K562 (cell line): ENCODE measurements at regions of chr2 and their contacts with region 1.

Region 1: GRCh38 chr2:196131384-196131937 is 39.9 kb downstream of the STK17B start:
- DNase-seq: peak; percentile 39 to 87 (median 46)
- ATAC-seq: peak; percentile 87
- H3K4me3 ChIP-seq: no peak overlapping the region
- H3K27ac ChIP-seq: no peak overlapping the region
- H3K4me1 ChIP-seq: peaks cover 0 to 25% of the 10 kb centered on the region in 2 experiments; a peak in 3 of 5 replicates
- H3K27me3 ChIP-seq: no peaks in the 10 kb centered on the region
- CTCF ChIP-seq: peak; percentile 71 to 80 (median 76)
- EP300 ChIP-seq: no peak
- POLR2A ChIP-seq: no peak
- RAD21 ChIP-seq: peak; percentile 91 to 93

Region 2: DNA sequence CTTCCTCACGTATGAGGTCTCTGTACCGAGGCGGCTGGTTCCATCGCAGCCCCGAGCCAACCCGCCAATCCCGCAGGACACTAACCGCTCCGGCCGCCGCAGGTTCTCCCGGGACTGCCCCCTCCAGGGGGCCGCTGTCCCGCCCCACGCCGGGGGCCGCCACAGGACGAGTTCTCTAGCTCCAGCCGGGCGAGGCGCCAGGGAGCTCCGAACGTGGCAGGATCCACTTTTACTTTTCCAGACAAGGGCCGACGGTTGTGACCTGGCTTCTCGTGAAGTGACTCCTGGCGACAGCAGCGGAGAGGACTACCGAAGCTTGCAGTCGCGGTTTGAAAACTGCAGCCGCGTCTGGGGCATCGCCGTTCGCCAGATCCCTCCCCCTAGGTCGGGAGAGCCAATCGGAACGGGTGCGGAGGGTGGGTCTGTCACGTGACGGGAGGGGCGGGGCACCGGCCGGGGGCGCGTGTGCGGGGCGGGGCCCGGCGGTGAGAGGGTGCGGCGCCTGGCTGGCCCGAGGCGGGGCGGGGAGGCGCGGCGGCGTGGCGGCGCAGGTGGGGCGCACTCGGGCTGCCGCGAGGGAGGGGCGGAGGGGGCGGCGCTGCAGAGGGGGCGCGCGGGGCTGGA is 39.9 kb after region 1 on chr2 and contains the start of gene STK17B:
- CTCF ChIA-PET with region 1: no interaction called
- POLR2A ChIA-PET with region 1: no interaction called
- in situ Hi-C with region 1: no loop called
- intact Hi-C with region 1: loop called (anchors 2 kb)
- DNase-seq: peak; percentile 93 to 97 (median 96)
- ATAC-seq: peak; percentile 87
- H3K4me3 ChIP-seq: peak within 1 kb of the TSS; percentile 87
- H3K27ac ChIP-seq: peak within 1 kb of the TSS; percentile 91
- H3K4me1 ChIP-seq: peaks cover 12 to 26% of the 10 kb centered on the region in 2 experiments; a peak in 4 of 5 replicates
- H3K27me3 ChIP-seq: no peaks in the 10 kb centered on the region
- CTCF ChIP-seq: peak in 2 of 3 experiments; percentile 21 to 28; a peak in 2 of 6 replicates
- EP300 ChIP-seq: no peak
- POLR2A ChIP-seq: peak; percentile 93
- RAD21 ChIP-seq: no peak; a peak in 1 of 4 replicates
- polyA plus RNA-seq, gene STK17B: 2.3 to 3.0 TPM

Region 3: GRCh38 chr2:196291873-196292800 is 160.7 kb after region 1 on chr2:
- CTCF ChIA-PET with region 1: no interaction called
- POLR2A ChIA-PET with region 1: no interaction called
- in situ Hi-C with region 1: no loop called
- intact Hi-C with region 1: loop called (anchors 2 kb)
- DNase-seq: no peak
- ATAC-seq: no peak
- H3K4me3 ChIP-seq: no peak overlapping the region
- H3K27ac ChIP-seq: no peak overlapping the region
- H3K4me1 ChIP-seq: no peaks in the 10 kb centered on the region
- H3K27me3 ChIP-seq: no peaks in the 10 kb centered on the region
- CTCF ChIP-seq: no peak
- EP300 ChIP-seq: no peak
- POLR2A ChIP-seq: no peak
- RAD21 ChIP-seq: no peak

Region 4: DNA sequence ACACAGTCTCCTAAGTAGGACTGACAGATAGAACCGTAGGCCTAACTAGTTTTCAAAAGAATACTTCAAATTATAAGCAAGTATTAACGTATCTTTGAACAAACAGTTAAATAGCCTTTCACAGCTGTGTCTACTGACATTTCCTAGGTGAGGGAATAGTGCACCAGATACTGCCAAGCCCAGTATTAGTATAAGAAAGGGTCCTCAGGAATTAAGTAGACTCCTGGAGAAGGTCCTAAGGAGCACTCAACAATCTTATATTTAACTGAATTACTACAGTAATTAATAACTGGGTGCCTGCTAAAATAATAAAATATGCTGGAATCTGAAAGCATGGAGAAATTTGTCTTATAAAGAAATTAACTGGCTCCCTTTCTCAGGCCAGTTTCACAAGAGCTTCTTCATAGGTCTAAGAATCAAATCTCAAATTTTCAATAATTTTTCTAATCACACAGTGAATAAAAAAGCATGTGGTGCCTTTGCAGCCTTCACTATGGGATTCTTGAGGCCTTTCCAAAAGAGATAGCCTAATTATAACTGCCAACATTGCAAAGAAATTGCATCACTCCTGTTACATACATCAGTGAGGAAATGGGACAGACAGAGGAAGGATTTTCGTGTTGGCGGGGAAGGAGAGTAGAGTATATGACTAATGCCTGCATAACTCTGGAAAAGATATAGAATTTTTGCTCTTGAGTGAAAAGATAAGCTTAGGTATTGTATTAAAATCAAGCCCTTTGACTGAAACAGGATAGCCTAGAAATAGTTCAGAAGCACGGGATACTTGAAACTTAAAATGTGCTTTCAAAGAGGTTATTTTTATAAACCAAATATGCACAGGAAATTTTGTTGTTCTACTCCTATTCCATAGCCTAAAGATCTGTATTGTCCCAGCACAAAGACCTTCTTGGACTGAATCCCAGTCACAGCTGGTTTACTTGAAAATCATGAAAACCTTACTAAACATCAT is 268.5 kb after region 1 on chr2:
- CTCF ChIA-PET with region 1: no interaction called
- POLR2A ChIA-PET with region 1: no interaction called
- in situ Hi-C with region 1: no loop called
- intact Hi-C with region 1: loop called (anchors 5 kb)
- DNase-seq: peak in 2 of 4 experiments; percentile 30 to 67
- ATAC-seq: peak; percentile 93
- H3K4me3 ChIP-seq: no peak overlapping the region
- H3K27ac ChIP-seq: peak overlapping the region; percentile 65
- H3K4me1 ChIP-seq: peaks cover 0 to 13% of the 10 kb centered on the region in 2 experiments; a peak in 2 of 5 replicates
- H3K27me3 ChIP-seq: no peaks in the 10 kb centered on the region
- CTCF ChIP-seq: no peak
- EP300 ChIP-seq: peak; percentile 99
- POLR2A ChIP-seq: no peak
- RAD21 ChIP-seq: peak in 1 of 2 experiments; percentile 21; a peak in 1 of 4 replicates

Region 5: GRCh38 chr2:196468394-196468793 is 336.9 kb after region 1 on chr2:
- CTCF ChIA-PET with region 1: no interaction called
- POLR2A ChIA-PET with region 1: no interaction called
- in situ Hi-C with region 1: loop called (anchors 10 kb)
- intact Hi-C with region 1: loop called (anchors 5 kb)
- DNase-seq: peak in 2 of 4 experiments; percentile 6 to 23
- ATAC-seq: 0 out of 3 replicates have a peak, but pooled peaks have one; percentile 40
- H3K4me3 ChIP-seq: no peak overlapping the region
- H3K27ac ChIP-seq: no peak overlapping the region
- H3K4me1 ChIP-seq: no peaks in the 10 kb centered on the region
- H3K27me3 ChIP-seq: no peaks in the 10 kb centered on the region
- CTCF ChIP-seq: peak; percentile 21 to 44 (median 44); a peak in 4 of 6 replicates
- EP300 ChIP-seq: no peak
- POLR2A ChIP-seq: no peak
- RAD21 ChIP-seq: peak in 1 of 2 experiments; percentile 74; a peak in 3 of 4 replicates